Dorsolateral prefrontal cortex (tissue), 120 donors: ENCODE measurements at regions of chr3 and their contacts with region 1.

Region 1: DNA sequence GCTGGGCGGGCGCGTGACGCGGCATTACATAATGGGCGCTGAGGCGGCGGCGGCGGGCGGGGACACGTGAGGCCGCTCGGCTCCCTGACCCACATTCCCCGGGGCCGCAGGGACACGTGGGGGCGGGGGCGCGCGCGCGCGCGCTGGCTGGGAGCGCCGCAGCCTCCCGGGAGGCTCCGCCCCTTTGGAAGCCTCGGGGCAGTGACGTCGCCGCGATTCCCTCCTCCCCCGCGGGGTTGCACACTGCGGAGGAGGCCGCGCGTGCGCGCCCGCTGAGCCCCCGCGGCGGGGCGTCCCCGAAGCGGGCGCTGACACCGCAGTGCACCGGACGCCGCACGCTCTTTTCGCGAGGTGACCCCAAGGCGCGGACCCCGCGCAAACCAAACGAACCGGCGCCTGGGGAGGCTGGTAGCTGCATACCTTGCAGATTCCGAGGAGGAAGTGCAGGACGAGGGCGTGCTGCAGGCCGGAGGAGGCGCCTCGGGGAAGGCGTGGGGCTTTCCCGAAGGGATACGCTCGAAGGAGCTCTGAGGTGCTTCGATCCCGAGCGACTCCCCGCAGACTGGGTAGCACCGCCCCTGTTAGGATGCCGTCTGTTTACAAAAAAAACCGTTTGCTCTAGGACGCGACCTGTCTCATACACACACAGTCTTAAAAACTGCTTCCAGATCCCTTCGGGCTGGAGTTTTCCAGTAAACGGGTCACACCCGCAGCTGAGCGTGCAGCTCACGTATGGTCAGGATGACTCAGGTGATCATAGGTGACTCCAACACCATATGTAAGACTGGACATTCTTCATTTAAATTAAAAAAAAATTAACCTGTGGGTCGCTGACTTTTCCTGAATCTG is 1.0 kb downstream of the NR1D2 start:
- DNase-seq: peak; percentile 95 to 98 (median 96)
- H3K4me3 ChIP-seq: peak overlapping the region; percentile 58 to 99 (median 87)
- H3K27ac ChIP-seq: peak overlapping the region; percentile 75 to 100 (median 97)
- H3K27me3 ChIP-seq: no peaks in the 10 kb centered on the region
- CTCF ChIP-seq: peak in 10 of 56 donors; percentile 6 to 35 (median 18)

Region 2: GRCh38 chr3:23421811-23422516 is 524.2 kb before region 1 on chr3:
- intact Hi-C with region 1: no loop called
- DNase-seq: no peak
- H3K4me3 ChIP-seq: no peak overlapping the region
- H3K27ac ChIP-seq: no peak overlapping the region
- H3K27me3 ChIP-seq: no peaks in the 10 kb centered on the region
- CTCF ChIP-seq: no peak

Region 3: DNA sequence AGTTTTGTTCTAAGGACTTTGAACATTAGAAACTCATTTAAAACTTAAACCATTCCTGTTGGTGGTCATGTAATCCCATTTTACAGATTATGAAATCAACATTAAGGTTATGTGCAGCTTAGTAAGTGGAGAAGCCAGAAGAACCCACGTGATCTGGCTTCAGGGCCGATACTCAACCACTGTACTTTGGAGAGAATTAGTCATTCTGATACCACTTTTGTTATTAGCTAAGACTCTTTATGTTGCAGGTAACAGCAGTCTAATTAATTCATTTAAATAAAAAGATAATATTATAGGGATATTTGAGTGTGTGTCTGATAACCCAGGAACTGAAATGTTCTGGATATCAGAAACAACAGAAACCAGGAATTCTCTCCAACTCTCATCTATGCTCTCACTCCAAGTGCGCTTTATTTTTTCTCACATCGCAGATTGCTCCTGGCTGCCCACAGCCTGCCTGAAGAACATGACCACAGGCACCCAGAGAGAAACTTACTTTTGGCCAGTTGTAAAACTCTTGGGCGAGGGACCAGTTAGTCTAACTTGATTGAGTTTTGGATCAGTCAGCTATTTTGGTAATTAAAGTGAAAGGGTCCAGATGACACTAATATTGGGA is 115.2 kb before region 1 on chr3:
- intact Hi-C with region 1: no loop called
- DNase-seq: no peak
- H3K4me3 ChIP-seq: no peak overlapping the region
- H3K27ac ChIP-seq: no peak overlapping the region
- H3K27me3 ChIP-seq: no peaks in the 10 kb centered on the region
- CTCF ChIP-seq: no peak

Region 4: GRCh38 chr3:23991683-23992628 is 45.8 kb after region 1 on chr3:
- intact Hi-C with region 1: loop called (anchors 2 to 5 kb)
- DNase-seq: peak in 3 of 10 donors; percentile 34 to 63 (median 47)
- H3K4me3 ChIP-seq: peak overlapping the region in 37 of 59 donors; percentile 0 to 49 (median 21)
- H3K27ac ChIP-seq: peak overlapping the region; percentile 46 to 97 (median 93)
- H3K27me3 ChIP-seq: no peaks in the 10 kb centered on the region
- CTCF ChIP-seq: peak in 5 of 56 donors; percentile 8 to 34 (median 18)

Region 5: GRCh38 chr3:24088782-24089181 is 142.7 kb after region 1 on chr3:
- intact Hi-C with region 1: no loop called
- DNase-seq: no peak
- H3K4me3 ChIP-seq: no peak overlapping the region
- H3K27ac ChIP-seq: no peak overlapping the region
- H3K27me3 ChIP-seq: no peaks in the 10 kb centered on the region
- CTCF ChIP-seq: peak in 1 of 56 donors; percentile 10

Region 6: GRCh38 chr3:24177201-24177600 is 231.1 kb after region 1 on chr3:
- intact Hi-C with region 1: no loop called
- DNase-seq: no peak
- H3K4me3 ChIP-seq: no peak overlapping the region
- H3K27ac ChIP-seq: peak overlapping the region in 8 of 59 donors; percentile 0 to 45 (median 12)
- H3K27me3 ChIP-seq: no peaks in the 10 kb centered on the region
- CTCF ChIP-seq: no peak